ENCODE measurements at regions of chr4 and their contacts with region 1.

Region 1: GRCh38 chr4:176195184-176195978 is at the start of gene SPATA4:
- DNase-seq: peak; percentile 91 to 99 (median 93)

Region 2: DNA sequence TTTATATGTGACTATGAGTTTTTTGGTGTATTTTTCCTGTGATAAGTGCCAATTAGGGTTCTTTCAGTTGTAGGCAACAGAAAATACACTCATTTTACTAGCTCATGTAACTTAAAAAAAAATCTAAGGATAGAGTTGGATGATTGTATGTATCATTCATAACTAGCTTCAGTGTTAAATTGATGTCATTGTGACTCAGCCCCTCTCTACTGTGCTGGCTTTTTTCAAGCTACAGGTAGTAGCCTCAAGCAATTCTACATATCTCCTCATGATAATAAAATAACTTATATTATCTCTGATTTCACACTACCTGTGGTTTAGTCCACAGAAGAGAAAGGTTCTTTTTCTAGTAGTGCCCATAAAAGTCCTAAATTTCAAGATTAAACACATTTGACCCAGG is 117.8 kb before region 1 on chr4:
- intact Hi-C with region 1: loop called (anchors 10 kb)
- DNase-seq: no peak

Region 3: DNA sequence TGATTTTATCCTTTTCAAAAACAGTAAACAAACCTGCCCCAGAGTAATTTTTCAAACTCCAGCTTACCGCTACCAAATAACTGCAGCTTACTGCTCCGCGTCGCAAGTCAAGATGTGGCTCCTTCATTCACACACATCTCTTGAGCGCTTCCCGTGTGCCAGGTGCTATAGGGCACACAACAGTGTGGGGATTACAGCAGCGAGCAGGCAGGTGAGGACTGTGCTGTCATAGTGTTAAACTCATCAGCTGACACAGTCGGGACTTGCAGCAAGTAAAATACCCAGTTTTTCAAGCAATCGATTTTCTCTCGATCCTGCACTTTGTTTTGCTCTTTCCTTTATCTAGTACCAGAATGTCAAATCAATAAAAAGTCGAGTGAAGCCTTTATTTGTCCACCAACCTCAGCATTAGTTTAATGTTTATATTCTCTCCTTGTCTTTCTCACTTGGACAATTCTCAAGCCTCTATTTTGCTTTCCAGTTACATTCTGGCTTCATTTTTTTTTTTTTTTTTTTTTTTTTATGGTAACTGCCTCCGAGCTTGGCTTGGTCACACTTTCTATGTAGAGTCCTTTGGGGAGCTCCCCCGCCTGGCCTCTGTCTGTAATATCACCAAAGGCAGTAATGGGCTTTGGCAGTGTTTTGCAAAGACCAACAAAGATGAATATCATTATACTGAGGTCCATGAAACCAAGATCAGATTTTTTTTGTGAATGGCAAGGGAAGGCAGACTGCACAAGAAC is 82.0 kb after region 1 on chr4:
- intact Hi-C with region 1: loop called (anchors 10 kb)
- DNase-seq: peak in 9 of 10 donors; percentile 12 to 86 (median 38)

Region 4: GRCh38 chr4:176319704-176320339 is 124.4 kb after region 1 on chr4 and contains the start of gene SPCS3:
- intact Hi-C with region 1: loop called (anchors 2 kb)
- DNase-seq: peak; percentile 92 to 100 (median 96)